Dendritic cell treated with granulocyte-macrophage colony-stimulating factor and Interleukin-4, amounts not matched to agents 40 ng/mL and 50 ng/mL, for 4 days (primary cell): ENCODE measurements at regions of chr22 and their contacts with region 1.

Region 1: GRCh38 chr22:31272522-31273446 is 19.5 kb downstream of the PIK3IP1 start:
- H3K4me3 Mint-ChIP-seq: no peak overlapping the region
- H3K27ac Mint-ChIP-seq: no peak overlapping the region
- H3K4me1 Mint-ChIP-seq: no peaks in the 10 kb centered on the region
- H3K27me3 Mint-ChIP-seq: no peaks in the 10 kb centered on the region

Region 2: DNA sequence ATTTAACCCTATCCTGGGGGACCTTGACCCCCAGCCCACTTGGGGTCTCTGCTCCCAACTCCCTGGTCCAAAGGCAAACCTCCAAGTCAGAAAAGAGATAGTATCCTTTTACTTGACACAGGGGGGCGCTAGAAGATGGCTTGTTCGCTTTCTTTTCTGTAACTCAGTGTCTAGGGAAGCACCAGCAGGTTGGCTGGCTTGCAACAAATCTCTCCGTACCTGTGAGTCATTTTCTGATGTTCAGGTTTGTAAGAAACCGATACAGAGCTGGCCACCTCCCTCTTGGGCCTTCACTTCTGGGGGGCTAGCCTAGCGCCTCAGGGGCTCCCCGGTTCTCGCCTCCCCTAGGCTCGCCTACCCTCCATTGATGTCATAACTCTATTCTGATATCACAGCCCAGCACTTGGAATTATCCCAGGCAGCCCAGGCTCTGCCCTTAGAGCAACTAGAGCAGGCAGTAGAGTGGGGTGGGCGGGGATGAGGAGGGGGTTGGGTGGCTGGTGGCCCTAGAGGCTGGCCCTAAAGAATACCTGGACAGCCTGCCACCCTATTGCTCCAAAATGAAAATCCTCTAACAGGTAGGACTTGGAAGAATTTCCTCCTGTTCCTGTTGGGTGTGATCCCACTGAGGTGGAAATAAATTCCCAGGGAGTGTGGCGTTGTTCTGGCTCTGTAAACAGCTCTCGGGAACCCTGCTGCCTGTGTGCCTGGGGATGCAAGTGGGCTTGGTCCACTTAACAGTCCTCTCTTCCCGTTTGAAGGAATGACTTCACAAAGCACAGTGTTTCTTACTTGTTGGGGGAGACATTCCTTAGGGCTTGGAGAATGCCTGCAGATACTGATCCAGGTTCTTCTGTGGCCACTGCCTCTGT is 508.7 kb before region 1 on chr22:
- intact Hi-C with region 1: loop called (anchors 10 kb)
- H3K4me3 Mint-ChIP-seq: no peak overlapping the region
- H3K27ac Mint-ChIP-seq: no peak overlapping the region
- H3K4me1 Mint-ChIP-seq: no peaks in the 10 kb centered on the region
- H3K27me3 Mint-ChIP-seq: no peaks in the 10 kb centered on the region

Region 3: GRCh38 chr22:31211862-31212730 is 60.7 kb before region 1 on chr22 and contains the start of gene LIMK2:
- intact Hi-C with region 1: loop called (anchors 5 kb)
- H3K4me3 Mint-ChIP-seq: peak within 1 kb of the TSS; percentile 90
- H3K27ac Mint-ChIP-seq: peak within 1 kb of the TSS; percentile 66
- H3K4me1 Mint-ChIP-seq: peaks cover 63% of the 10 kb centered on the region
- H3K27me3 Mint-ChIP-seq: no peaks in the 10 kb centered on the region